ENCODE measurements at regions of chr22 and their contacts with region 1.

Region 1: GRCh38 chr22:39490135-39490798 is 11.8 kb upstream of the MIEF1 start:
- DNase-seq: peak; percentile 60
- H3K4me3 ChIP-seq: no peak overlapping the region
- H3K27ac ChIP-seq: no peak overlapping the region
- H3K4me1 ChIP-seq: no peaks in the 10 kb centered on the region
- H3K27me3 ChIP-seq: no peaks in the 10 kb centered on the region
- CTCF ChIP-seq: no peak
- POLR2A ChIP-seq: no peak

Region 2: DNA sequence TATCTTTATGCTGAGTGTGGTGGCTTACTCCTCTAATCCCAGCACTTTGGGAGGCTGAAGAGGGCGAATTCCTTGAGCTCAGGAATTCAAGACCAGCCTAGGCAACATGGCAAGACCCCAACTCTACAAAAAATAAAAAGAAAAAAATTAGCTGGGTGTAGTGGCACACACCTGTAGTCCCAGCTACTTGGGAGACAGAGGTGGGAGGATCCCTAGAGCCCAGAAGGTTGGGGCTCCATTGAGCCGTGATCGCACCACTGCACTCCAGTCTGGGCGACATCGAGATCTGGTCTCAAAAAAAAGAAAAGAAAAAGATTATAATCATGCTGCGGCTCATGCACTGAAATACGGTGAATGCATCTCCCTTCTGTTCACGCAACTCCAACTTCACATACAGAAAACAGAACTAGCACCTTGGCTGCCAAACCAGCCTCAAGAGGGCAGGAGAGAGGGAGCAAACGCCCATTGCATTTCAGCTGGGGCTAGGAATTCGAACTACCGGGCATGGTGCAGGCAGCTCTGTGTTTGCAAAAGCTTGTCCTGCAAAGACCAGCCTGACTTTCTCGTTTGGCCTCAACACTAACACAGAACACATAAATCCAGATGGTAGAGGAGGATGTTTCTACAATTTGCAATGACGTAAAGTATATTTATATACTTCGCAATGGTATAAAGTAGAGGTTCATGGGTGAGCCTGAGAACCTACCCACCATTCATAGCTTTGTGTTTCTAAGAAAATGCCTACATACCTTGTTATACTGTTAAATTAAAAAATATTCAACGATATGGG is 146.8 kb before region 1 on chr22:
- CTCF ChIA-PET with region 1: interaction called, 3 read pairs
- POLR2A ChIA-PET with region 1: no interaction called
- dilution Hi-C with region 1: no loop called
- intact Hi-C with region 1: loop called (anchors 10 kb)
- DNase-seq: peak; percentile 53
- H3K4me3 ChIP-seq: no peak overlapping the region
- H3K27ac ChIP-seq: no peak overlapping the region
- H3K4me1 ChIP-seq: peaks cover 2% of the 10 kb centered on the region
- H3K27me3 ChIP-seq: peaks cover 5 to 10% of the 10 kb centered on the region in 2 experiments
- CTCF ChIP-seq: peak; percentile 70 to 83
- POLR2A ChIP-seq: no peak

Region 3: DNA sequence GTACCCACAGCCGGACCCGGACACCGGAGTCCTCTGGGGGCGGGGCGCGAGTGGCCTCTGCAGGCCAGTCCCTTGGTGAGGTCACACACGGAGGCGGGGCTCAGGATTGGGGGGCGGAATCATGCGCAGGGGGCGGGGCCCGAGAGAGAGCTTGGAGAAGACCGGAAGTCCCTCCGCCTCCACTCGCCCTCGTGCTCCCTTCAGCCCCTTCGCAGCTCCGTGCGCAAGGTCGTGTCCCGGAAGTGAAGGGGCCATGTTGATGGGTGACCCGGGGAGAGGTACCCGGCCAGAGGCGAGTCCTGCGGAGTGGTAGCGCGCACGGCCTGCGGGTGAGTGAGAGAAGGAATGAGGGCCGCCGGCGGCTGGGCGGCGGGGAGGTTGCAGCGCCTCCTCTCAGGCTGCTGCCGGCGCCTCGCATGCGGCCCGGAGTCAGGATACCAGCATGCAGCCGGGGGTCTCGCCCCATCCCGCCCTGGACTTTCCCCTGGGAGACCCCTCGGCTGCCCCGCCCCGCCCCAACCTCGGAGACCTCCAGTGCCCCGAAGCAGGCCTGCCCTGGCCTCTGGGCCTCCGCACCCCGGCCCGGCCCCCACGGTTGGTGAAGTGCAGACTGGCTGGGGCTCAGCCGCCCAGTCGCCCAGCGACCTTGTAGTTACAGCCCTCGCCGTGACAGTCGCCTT is 12.0 kb after region 1 on chr22 and contains the start of gene MIEF1:
- CTCF ChIA-PET with region 1: interaction called, 12 read pairs
- POLR2A ChIA-PET with region 1: no interaction called
- dilution Hi-C with region 1: no loop called
- intact Hi-C with region 1: no loop called
- DNase-seq: peak; percentile 96
- H3K4me3 ChIP-seq: peak within 1 kb of the TSS; percentile 51 to 76 (median 67)
- H3K27ac ChIP-seq: peak within 1 kb of the TSS; percentile 5
- H3K4me1 ChIP-seq: peaks cover 12% of the 10 kb centered on the region
- H3K27me3 ChIP-seq: peaks cover 0 to 3% of the 10 kb centered on the region in 2 experiments
- CTCF ChIP-seq: no peak
- POLR2A ChIP-seq: peak; percentile 79
- total RNA-seq, gene MIEF1: 24.7 and 31.1 TPM in 2 replicates

Region 4: DNA sequence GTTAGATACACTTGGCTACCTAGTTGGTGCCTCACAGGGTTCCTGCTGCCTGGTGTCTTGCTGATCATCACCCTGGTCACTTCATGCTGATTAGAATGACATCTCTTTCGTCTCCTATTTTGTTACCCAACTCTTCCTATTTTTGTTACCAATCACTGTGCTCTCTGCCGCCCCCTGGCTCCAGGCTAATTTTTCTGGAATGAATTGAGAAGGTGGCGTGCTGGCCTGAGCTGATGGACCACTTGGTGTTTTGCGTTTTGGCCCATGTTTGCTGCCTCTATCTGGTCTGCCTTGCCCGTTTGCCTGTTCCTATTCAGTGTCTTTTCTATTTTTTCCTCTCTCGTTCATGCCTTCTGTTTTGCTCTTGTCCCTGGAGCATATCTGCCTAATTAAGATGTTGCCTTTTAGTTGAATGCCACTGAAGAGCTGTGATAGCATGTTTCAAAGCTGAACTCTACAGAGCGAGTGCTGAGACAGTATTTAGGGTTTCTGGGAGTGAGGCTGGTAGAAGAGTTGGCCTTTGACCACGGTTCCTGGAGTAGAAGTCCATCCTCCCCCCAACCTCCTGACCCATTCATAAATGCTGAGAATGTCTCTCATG is 24.2 kb after region 1 on chr22:
- CTCF ChIA-PET with region 1: interaction called, 49 read pairs
- POLR2A ChIA-PET with region 1: interaction called, 3 read pairs
- dilution Hi-C with region 1: no loop called
- intact Hi-C with region 1: no loop called
- DNase-seq: peak; percentile 41
- H3K4me3 ChIP-seq: no peak overlapping the region
- H3K27ac ChIP-seq: no peak overlapping the region
- H3K4me1 ChIP-seq: peaks cover 8% of the 10 kb centered on the region
- H3K27me3 ChIP-seq: no peaks in the 10 kb centered on the region
- CTCF ChIP-seq: peak; percentile 75 to 83
- POLR2A ChIP-seq: no peak

Region 5: GRCh38 chr22:40036591-40037225 is 546.4 kb after region 1 on chr22:
- CTCF ChIA-PET with region 1: interaction called, 14 read pairs
- POLR2A ChIA-PET with region 1: no interaction called
- dilution Hi-C with region 1: no loop called
- intact Hi-C with region 1: no loop called
- DNase-seq: peak; percentile 69
- H3K4me3 ChIP-seq: no peak overlapping the region
- H3K27ac ChIP-seq: no peak overlapping the region
- H3K4me1 ChIP-seq: peaks cover 11% of the 10 kb centered on the region
- H3K27me3 ChIP-seq: peaks cover 3 to 24% of the 10 kb centered on the region in 2 experiments
- CTCF ChIP-seq: peak; percentile 62 to 84
- POLR2A ChIP-seq: no peak